Prostate gland (tissue), 2 donors: ENCODE measurements at regions of chr11 and their contacts with region 1.

Region 1: GRCh38 chr11:99534812-99535211 is 514.1 kb downstream of the CNTN5 start:
- DNase-seq: no peak
- H3K4me3 ChIP-seq: no peak overlapping the region
- H3K27ac ChIP-seq: no peak overlapping the region
- H3K4me1 ChIP-seq: no peaks in the 10 kb centered on the region
- H3K27me3 ChIP-seq: no peaks in the 10 kb centered on the region
- CTCF ChIP-seq: no peak
- POLR2A ChIP-seq: no peak

Region 2: GRCh38 chr11:100776212-100776896 is 1241.5 kb after region 1 on chr11:
- intact Hi-C with region 1: loop called (anchors 10 kb)
- DNase-seq: no peak
- H3K4me3 ChIP-seq: no peak overlapping the region
- H3K27ac ChIP-seq: no peak overlapping the region
- H3K4me1 ChIP-seq: no peaks in the 10 kb centered on the region
- H3K27me3 ChIP-seq: no peaks in the 10 kb centered on the region
- CTCF ChIP-seq: no peak
- POLR2A ChIP-seq: no peak